ENCODE measurements at regions of chr21 and their contacts with region 1.

Region 1: DNA sequence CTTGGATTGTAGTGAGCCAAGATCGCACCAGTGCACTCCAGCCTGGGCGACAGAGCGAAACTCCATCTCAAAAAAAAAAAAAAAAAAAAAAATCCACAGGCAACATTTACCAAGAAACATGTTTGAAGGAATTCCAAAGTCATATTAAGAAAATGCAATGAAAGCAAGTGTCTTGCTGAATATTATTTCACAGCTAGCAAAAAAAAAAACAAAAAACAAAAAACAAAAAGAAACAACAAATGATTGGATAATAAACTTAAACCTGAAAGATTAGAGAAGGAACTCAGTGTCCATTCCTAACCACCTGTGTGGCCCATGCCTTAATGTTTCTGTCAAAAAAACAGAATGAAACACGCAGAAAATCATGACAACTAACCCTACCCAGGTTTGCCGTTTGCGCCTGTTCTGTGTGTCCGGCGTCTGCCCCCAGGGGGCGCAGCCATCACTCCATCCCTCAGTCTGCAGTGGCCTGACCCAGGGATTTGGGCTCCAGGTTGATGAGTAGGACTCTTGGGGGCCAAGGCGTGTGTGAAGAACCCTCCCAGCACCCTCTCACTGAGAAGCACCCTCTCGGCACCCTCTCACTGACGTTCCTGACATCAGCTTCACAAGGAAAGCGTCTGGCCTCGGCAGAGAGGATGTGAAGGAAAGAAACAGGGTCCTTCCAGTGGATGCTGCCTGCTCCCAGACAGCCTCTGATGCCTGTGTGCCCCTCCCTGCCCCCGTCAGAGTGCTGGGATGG is 19.2 kb upstream of the PTTG1IP start:
- DNase-seq: peak; percentile 83
- CTCF ChIP-seq: peak; percentile 88

Region 2: DNA sequence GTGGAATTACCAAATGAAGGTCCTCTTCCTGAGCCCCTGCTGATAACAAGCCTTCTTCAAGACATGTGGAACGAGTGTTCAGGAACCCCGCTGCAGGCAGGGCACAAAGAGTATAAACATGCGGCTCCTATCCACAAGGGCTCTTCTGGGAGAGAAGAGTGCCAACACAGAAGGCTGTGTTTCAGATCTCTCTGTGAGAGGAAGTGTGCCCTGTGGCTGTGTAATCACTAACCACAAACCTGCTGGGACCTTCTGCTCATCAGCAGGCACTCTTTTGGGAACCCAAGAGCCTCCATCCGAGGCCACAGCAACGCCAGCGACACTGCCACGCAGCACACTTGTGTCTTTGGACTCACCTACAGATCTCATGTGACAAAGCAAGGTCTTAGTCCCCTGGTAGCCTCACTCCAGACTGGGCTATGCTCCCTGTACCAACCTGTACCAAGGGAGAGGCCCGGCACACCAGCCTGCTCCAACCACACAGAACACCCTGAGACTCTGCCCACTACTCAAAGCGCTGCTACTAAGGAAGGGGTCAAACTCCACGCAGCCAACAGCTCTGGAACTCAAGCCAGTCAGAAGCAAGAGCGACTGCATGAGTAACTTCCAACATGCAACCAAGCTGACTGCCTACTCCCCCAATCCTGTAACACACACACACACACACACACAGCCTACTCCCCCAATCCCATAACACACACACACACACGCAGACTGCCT is 27.0 kb before region 1 on chr21:
- CTCF ChIA-PET with region 1: no interaction called
- POLR2A ChIA-PET with region 1: no interaction called
- DNase-seq: no peak
- CTCF ChIP-seq: no peak

Region 3: DNA sequence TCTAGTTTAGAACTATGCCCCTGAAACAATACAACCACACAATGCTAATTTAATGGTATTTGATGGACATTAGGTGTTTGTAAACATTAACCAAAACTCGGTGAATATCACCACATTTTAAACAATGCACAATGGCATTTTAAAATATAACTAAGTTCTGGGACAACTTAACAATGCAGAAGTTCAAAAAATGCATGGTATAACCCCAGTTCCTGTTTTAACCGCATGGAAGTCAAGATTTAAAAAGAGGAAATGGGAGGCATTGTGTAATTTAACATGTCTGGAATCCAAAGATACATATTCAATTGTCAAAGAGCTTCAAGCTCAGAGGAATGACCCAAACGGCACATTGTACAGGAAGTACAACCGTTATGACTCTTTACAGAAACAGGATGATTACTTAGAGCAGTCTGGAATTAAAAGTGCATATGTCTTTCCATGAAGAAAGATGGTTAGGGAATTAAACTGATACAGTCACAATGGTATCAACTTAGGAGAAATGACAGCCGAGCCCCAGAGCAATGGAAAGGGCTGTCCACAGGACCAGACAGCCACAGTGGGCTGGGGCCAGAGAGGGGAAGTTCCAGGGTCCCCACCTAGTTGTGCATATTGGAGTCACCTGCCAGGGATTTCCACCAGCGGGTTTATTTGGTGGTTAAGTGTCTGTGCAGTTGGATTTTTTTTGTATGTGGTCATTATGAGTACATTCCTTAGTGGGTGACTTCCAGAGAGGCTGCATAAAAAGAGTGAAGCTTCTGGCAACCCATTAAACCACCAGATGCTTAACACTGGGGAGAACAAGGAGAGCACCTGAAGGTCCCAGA is 11.7 kb before region 1 on chr21:
- CTCF ChIA-PET with region 1: interaction called, 46 read pairs
- POLR2A ChIA-PET with region 1: no interaction called
- DNase-seq: no peak
- CTCF ChIP-seq: no peak

Region 4: GRCh38 chr21:44911389-44912157 is 18.9 kb after region 1 on chr21:
- CTCF ChIA-PET with region 1: interaction called, 26 read pairs
- POLR2A ChIA-PET with region 1: no interaction called
- DNase-seq: no peak
- CTCF ChIP-seq: peak; percentile 47

Region 5: DNA sequence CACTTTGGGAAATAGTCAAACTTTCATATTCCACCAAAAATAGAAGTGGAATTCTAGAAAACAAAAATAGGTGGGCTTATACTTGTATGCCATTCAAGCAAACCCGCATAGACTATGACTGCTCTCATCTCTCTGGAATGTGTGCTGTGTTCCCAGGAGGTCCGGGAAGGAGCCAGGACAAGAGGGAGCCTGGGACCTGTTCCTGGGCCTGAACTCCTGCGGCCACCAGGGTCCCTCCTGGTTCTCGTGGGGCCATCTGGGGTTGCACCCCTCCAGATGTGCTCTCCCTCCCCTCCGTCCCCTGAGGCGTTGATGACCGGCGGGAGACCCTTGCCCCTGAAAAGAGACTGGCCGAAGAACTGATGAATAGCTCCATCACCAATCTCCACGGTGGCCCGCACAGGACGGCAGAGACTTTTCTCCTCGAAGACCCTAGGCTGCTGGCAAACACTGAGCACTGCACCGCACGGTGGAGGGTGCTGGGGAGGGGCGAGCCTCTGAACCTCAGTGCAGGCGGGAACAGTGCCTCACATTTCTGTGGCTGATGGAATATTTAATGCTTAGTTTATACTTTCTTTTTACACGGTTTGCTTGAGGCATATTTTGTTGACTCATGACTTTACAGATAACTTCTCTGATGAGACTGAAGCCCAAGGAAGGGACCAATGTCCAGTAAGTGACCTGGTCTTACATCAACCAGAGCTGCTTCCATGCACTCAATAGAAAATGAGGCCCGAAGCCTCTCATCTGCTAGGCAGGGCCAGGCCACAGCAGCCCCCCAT is 172.1 kb after region 1 on chr21:
- CTCF ChIA-PET with region 1: no interaction called
- POLR2A ChIA-PET with region 1: no interaction called
- DNase-seq: no peak
- CTCF ChIP-seq: no peak